RWPE1 (cell line): ENCODE measurements at regions of chr6 and their contacts with region 1.

Region 1: DNA sequence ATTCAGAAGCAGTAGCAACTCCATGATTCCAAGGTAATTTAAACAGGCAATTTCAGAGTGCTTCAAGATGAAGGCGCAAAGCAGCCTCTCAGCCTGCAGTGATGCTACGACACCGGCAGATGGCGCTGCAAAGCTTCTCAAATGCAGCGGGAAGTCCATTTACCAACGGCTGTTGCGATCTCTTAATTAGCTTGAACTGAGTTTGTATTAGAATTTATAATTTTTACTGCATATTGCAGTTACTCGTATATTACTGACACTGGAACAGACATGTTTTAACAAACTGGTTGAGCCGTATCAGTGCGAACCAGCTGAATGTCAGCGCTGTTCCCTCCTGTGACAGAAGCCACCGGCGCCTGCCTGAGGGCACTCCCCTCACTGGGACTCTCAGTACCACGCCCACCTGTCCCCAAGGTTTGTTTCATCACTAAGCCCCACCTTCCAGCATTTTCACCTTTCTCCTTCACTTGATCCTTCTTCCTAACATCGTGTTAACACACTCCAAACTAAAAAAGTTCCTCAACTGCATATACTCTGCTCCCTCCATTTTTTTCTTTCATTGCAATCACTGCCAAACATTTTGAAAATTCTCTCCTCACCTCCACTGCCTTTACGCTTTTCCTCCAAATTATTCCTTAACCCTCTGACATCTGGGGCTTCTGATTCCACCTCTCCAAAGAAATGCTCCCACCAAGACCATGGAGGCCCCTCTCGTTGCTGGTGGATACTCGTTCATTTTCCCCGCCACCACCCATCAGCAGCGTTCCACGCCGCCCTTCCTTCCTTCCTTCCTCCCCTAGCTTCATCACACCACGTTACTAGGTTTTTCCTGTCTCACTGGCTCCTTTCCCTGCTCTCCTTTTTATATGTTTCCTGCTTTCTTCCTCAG is 14.5 kb downstream of the GNL1 start:
- DNase-seq: peak; percentile 62
- H3K27ac ChIP-seq: no peak overlapping the region
- CTCF ChIP-seq: peak; percentile 97

Region 2: DNA sequence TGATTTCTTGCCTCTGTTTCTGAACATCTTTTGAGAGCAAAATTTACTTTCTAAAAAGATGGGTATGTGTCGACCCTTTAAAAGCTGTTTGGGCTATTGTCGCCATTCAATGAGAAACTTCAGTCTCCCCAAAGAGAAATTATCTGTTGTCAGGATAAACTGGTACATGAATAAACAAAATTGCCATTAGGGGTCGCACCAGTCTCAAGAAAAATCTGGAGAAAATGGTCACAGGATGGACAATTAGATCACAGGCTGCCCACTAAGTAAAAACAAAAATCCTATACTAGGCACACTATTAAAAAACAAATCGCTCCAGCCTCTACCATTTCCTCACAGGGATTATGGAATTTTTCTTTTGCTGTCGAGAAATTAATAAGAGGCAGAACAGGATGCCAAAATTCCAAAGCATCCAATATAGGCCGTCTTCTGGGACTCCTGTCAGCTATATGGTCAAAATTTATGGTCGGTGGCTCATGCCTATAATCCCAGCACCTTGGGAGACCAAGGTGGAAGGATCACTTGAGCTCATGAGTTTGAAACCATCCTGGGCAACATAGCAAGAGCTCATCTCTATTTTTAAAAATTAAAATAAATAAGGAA is 58.0 kb before region 1 on chr6:
- CTCF ChIA-PET with region 1: interaction called, 39 read pairs
- POLR2A ChIA-PET with region 1: no interaction called
- DNase-seq: no peak
- H3K27ac ChIP-seq: no peak overlapping the region
- CTCF ChIP-seq: peak; percentile 49; the same call in 1 of the 2 replicates